Activated CD4-positive, alpha-beta T cell treated with anti-CD3 and anti-CD28 coated beads for 36 hours (primary cell): ENCODE measurements at regions of chr1 and their contacts with region 1.

Region 1: GRCh38 chr1:11072216-11072917 is 12.5 kb upstream of the SRM start:
- DNase-seq: no peak
- ATAC-seq: no peak
- H3K4me3 Mint-ChIP-seq: no peak overlapping the region
- H3K27ac Mint-ChIP-seq: no peak overlapping the region
- H3K4me1 Mint-ChIP-seq: peaks cover 9% of the 10 kb centered on the region
- H3K27me3 Mint-ChIP-seq: no peaks in the 10 kb centered on the region

Region 2: GRCh38 chr1:11262171-11263049 is 190.0 kb after region 1 on chr1 and contains the start of gene MTOR:
- CTCF ChIA-PET with region 1: no interaction called
- POLR2A ChIA-PET with region 1: no interaction called
- intact Hi-C with region 1: no loop called
- DNase-seq: peak; percentile 98
- ATAC-seq: peak; percentile 98
- H3K4me3 Mint-ChIP-seq: peak within 1 kb of the TSS; percentile 90
- H3K27ac Mint-ChIP-seq: peak within 1 kb of the TSS; percentile 87
- H3K4me1 Mint-ChIP-seq: peaks cover 15% of the 10 kb centered on the region
- H3K27me3 Mint-ChIP-seq: no peaks in the 10 kb centered on the region
- total RNA-seq, gene MTOR: 32.3 to 36.3 TPM

Region 3: DNA sequence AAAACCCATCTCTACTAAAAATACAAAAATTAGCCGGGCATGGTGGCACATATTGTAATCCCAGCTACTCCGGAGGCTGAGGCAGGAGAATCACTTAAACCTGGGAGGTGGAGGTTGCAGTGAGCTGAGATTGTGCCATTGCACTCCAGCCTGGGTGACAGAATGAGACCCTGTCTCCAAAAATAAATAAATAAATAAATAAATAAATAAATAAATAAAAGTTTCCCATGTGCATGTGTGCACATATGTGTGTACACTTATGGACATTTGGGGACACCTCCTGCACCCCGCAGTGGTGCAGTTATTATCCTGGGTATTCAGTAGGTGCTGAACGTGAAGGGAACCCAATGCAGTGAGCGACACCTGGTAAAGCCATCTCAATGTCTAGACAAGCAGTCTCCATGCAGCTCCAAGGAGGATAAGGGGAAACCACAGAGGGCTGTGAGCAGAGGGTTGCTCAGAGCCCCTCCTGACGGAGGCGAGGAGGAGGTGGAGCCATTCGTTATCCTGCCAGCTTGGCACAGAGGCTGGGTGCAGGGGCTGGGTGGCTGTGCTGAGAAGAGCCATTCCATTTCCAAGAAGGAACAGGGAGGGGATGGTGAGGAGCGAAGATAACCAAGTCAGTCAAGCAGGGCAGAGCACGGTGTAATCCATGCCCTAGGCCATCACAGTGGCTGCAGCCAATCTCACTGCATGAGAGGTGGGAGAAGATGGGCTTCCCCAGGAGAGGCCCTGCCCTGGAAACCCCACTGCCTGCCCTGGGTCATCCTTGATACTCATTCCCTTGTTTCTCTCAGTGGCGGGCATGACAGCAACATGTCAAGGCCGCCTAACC is 226.2 kb after region 1 on chr1:
- CTCF ChIA-PET with region 1: no interaction called
- POLR2A ChIA-PET with region 1: interaction called, 12 read pairs
- intact Hi-C with region 1: no loop called
- DNase-seq: no peak
- ATAC-seq: peak; percentile 49
- H3K4me3 Mint-ChIP-seq: no peak overlapping the region
- H3K27ac Mint-ChIP-seq: peak overlapping the region; percentile 89
- H3K4me1 Mint-ChIP-seq: peaks cover 44% of the 10 kb centered on the region
- H3K27me3 Mint-ChIP-seq: no peaks in the 10 kb centered on the region